Activated CD4-positive, alpha-beta memory T cell treated with anti-CD3 and anti-CD28 coated beads for 36 hours (primary cell): ENCODE measurements at regions of chr3 and their contacts with region 1.

Region 1: GRCh38 chr3:69306239-69307185 is 79.4 kb downstream of the FRMD4B start:
- DNase-seq: peak; percentile 81
- H3K4me3 Mint-ChIP-seq: no peak overlapping the region
- H3K27ac Mint-ChIP-seq: no peak overlapping the region
- H3K4me1 Mint-ChIP-seq: peaks cover 23% of the 10 kb centered on the region
- H3K27me3 Mint-ChIP-seq: peaks cover 3% of the 10 kb centered on the region

Region 2: GRCh38 chr3:69129531-69129930 is 177.0 kb before region 1 on chr3:
- CTCF ChIA-PET with region 1: interaction called, 10 read pairs
- POLR2A ChIA-PET with region 1: no interaction called
- intact Hi-C with region 1: no loop called
- DNase-seq: no peak
- H3K4me3 Mint-ChIP-seq: no peak overlapping the region
- H3K27ac Mint-ChIP-seq: no peak overlapping the region
- H3K4me1 Mint-ChIP-seq: no peaks in the 10 kb centered on the region
- H3K27me3 Mint-ChIP-seq: peaks cover 1% of the 10 kb centered on the region

Region 3: DNA sequence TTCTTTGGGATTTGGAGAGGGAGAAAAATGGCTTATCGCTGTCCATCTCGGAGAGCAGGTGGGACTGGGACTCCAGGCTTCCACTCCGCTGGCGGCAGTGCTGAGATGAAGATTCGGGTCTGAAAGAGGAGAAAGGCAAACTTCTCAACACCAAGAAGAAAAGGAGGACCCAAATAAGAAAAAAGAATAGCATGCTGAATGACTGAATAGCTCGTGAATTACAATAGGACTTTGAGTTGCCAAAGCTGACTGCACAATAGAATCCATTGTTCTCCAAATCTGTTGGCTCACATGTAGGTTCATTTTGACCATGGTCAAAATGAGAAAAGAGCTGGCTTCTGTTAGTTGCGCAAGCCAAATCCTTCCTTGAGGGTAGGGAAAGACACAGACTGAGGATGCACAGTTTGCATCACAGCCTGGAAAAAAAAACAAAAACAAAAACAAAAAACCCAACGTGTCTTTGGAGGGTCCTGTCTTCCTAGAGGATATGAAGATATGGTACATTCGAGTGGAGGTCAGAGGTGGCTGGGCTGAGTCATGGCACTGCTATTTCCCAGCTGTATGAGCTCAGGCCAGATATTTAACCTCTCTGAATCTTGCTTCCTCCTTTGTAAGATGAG is 124.8 kb before region 1 on chr3:
- CTCF ChIA-PET with region 1: interaction called, 16 read pairs
- POLR2A ChIA-PET with region 1: no interaction called
- intact Hi-C with region 1: no loop called
- DNase-seq: no peak
- H3K4me3 Mint-ChIP-seq: no peak overlapping the region
- H3K27ac Mint-ChIP-seq: no peak overlapping the region
- H3K4me1 Mint-ChIP-seq: peaks cover 42% of the 10 kb centered on the region
- H3K27me3 Mint-ChIP-seq: no peaks in the 10 kb centered on the region

Region 4: DNA sequence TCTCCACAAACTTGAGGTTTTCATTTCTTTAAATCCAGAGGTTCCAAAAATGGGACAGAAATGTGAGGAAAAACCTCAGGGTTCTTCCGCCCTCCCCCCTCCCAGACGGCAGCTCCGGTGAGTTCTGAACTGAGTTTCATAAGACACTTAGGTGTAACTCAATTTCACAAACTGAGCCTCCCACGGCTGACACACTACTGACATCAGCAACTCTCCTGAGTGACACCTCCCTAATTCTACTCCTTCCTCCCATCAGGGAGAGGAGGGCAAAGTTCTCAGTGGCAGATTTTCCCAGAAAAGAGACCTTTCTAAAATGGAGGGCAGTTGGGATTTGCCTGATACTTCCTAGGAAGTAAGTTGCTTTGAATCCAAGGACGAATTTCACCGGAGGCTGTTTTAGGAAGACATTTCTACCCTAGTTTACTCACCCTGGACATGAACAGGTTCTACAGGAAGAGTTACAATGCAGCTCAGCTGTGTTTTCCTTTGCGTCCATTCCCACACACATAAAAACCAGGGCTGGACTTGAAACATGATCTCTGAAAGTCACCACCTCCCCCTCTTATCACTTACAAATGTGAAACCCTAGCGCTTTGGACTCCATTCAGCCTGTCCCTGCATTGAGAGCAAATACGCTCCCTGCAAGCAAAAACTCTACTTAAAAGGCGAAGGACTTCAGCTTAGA is 106.0 kb before region 1 on chr3:
- CTCF ChIA-PET with region 1: interaction called, 70 read pairs
- POLR2A ChIA-PET with region 1: interaction called, 7 read pairs
- intact Hi-C with region 1: loop called (anchors 1 kb)
- DNase-seq: peak; percentile 82
- H3K4me3 Mint-ChIP-seq: peak overlapping the region; percentile 92
- H3K27ac Mint-ChIP-seq: peak overlapping the region; percentile 98
- H3K4me1 Mint-ChIP-seq: peaks cover 74% of the 10 kb centered on the region
- H3K27me3 Mint-ChIP-seq: no peaks in the 10 kb centered on the region

Region 5: GRCh38 chr3:69282181-69282580 is 24.3 kb before region 1 on chr3:
- CTCF ChIA-PET with region 1: interaction called, 57 read pairs
- POLR2A ChIA-PET with region 1: interaction called, 11 read pairs
- intact Hi-C with region 1: loop called (anchors 1 kb)
- DNase-seq: peak; percentile 84
- H3K4me3 Mint-ChIP-seq: no peak overlapping the region
- H3K27ac Mint-ChIP-seq: peak overlapping the region; percentile 38
- H3K4me1 Mint-ChIP-seq: peaks cover 19% of the 10 kb centered on the region
- H3K27me3 Mint-ChIP-seq: no peaks in the 10 kb centered on the region

Region 6: DNA sequence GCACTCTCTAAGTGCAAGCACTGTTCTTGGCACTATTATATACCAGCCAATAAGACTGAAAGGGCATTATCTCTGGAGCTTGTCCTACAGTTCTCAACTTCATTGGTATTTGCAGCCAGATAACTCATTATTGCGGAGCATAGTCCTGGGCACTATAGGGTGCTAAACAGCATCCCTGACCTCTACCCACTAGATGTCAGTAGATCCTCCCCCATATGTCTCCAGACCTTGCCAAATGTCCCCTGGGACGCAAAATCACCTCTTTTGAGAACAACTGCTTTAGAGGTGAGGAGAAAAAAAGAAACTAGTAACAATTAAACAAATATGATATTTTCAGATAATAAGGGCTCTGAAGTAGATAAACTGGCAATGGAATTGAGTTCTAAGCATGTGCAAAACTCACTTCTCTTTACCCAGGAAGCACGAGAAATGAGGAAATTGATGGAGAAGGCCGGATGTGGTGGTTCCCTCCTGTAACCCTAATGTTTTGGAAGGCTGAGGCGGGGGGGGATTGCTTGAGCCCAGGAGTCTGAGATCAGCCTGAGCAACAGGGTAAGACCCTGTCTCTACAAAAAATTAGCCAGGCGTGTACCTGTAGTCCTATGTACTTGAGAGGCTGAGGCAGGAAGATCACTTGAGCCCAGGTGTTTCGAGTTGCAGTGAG is 18.0 kb after region 1 on chr3:
- CTCF ChIA-PET with region 1: interaction called, 14 read pairs
- POLR2A ChIA-PET with region 1: interaction called, 4 read pairs
- intact Hi-C with region 1: loop called (anchors 1 kb)
- DNase-seq: no peak
- H3K4me3 Mint-ChIP-seq: no peak overlapping the region
- H3K27ac Mint-ChIP-seq: no peak overlapping the region
- H3K4me1 Mint-ChIP-seq: peaks cover 47% of the 10 kb centered on the region
- H3K27me3 Mint-ChIP-seq: no peaks in the 10 kb centered on the region